Naive thymus-derived CD4-positive, alpha-beta T cell (primary cell): ENCODE measurements at regions of chr2 and their contacts with region 1.

Region 1: GRCh38 chr2:199739413-199740110 is 111.4 kb downstream of the FTCDNL1 start:
- DNase-seq: peak in 8 of 9 donors; percentile 13 to 57 (median 34)
- ATAC-seq: peak; percentile 73
- H3K4me3 ChIP-seq: no peak overlapping the region
- H3K4me3 Mint-ChIP-seq: peak overlapping the region in 2 of 10 donors; percentile 8 to 10
- H3K27ac ChIP-seq: no peak overlapping the region
- H3K27ac Mint-ChIP-seq: no peak overlapping the region
- H3K4me1 ChIP-seq: no peaks in the 10 kb centered on the region
- H3K4me1 Mint-ChIP-seq: peaks cover 0 to 7% (median 5%) of the 10 kb centered on the region in 7 donors
- H3K27me3 ChIP-seq: no peaks in the 10 kb centered on the region
- H3K27me3 Mint-ChIP-seq: peaks cover 6 to 32% (median 19%) of the 10 kb centered on the region in 5 donors

Region 2: DNA sequence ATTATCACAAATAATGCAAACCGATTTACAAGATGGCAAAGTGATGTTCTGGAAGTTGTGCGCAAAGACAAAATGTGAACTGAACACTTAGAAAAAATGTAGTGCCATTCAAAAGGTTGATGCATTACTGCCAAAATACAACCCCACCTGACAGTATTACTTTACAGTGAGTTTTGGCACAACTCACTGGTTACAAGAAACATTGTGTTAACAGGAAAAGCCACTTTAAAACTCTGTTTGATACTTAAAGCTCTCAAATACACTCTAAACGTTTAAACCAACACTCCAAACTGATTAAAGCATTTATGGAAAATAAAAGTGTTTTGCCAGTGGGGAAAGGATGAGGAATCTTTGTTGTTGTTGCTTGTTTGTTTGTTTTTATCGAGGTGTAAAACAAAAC is 108.4 kb before region 1 on chr2:
- CTCF ChIA-PET with region 1: no interaction called
- POLR2A ChIA-PET with region 1: no interaction called
- intact Hi-C with region 1: no loop called
- DNase-seq: no peak
- ATAC-seq: no peak
- H3K4me3 ChIP-seq: no peak overlapping the region
- H3K4me3 Mint-ChIP-seq: no peak overlapping the region
- H3K27ac ChIP-seq: no peak overlapping the region
- H3K27ac Mint-ChIP-seq: no peak overlapping the region
- H3K4me1 ChIP-seq: no peaks in the 10 kb centered on the region
- H3K4me1 Mint-ChIP-seq: no peaks in the 10 kb centered on the region
- H3K27me3 ChIP-seq: no peaks in the 10 kb centered on the region
- H3K27me3 Mint-ChIP-seq: peaks cover 0 to 7% (median 4%) of the 10 kb centered on the region in 5 donors

Region 3: DNA sequence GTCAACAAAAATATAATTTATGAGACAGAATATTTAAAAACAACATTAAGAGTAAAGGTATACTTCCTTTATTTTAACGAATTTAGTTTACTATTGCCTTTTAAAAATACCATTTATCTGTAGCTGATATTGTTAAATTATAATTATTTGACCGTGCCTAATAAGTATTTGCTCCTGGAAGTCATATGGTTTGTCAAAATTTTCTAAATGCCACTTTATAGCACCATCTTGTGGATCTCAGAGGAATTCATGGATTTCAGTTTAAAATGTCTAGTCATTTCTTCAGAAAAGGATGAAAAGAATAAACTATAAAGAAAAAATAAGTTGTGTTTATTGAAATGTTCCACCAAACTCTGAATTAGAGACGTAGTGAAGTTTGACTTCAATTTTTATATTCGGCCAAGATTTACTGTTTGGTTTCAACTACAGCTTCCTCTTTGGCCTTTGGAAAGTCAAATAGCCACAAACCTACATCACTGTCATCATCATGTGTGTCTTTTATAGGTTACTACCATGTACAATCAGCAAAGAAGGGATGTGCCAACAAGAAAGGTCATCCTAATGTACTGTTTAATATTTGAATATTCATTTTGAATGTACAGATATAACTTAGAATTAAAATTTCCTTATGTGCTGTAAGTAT is 121.7 kb after region 1 on chr2:
- CTCF ChIA-PET with region 1: no interaction called
- POLR2A ChIA-PET with region 1: no interaction called
- intact Hi-C with region 1: loop called (anchors 1 to 10 kb)
- DNase-seq: peak in 1 of 9 donors; percentile 3
- ATAC-seq: peak; percentile 42
- H3K4me3 ChIP-seq: no peak overlapping the region
- H3K4me3 Mint-ChIP-seq: no peak overlapping the region
- H3K27ac ChIP-seq: no peak overlapping the region
- H3K27ac Mint-ChIP-seq: no peak overlapping the region
- H3K4me1 ChIP-seq: no peaks in the 10 kb centered on the region
- H3K4me1 Mint-ChIP-seq: no peaks in the 10 kb centered on the region
- H3K27me3 ChIP-seq: no peaks in the 10 kb centered on the region
- H3K27me3 Mint-ChIP-seq: peaks cover 6 to 57% (median 17%) of the 10 kb centered on the region in 5 donors

Region 4: DNA sequence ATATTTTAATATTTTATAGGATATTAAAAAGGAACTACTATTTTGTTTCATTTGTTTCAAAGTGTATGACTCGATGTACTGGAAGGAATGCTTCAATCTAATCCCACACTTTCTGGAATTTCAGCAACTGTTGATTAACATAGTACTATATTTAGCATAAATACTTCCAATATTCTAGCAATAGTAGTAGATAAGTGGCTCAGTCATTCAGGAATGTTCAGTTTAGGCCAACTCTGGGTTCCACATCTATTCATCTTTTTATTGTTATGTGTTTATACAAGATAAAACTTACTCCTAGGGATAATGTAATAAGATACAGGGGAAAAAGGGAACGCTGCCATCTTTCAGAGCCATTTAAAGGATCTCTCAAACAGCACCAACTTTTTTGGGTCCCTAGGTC is 1246.2 kb after region 1 on chr2:
- CTCF ChIA-PET with region 1: no interaction called
- POLR2A ChIA-PET with region 1: no interaction called
- intact Hi-C with region 1: no loop called
- DNase-seq: no peak
- ATAC-seq: no peak
- H3K4me3 ChIP-seq: no peak overlapping the region
- H3K4me3 Mint-ChIP-seq: no peak overlapping the region
- H3K27ac ChIP-seq: no peak overlapping the region
- H3K27ac Mint-ChIP-seq: peak overlapping the region in 1 of 9 donors; percentile 11
- H3K4me1 ChIP-seq: no peaks in the 10 kb centered on the region
- H3K4me1 Mint-ChIP-seq: peaks cover 0 to 2% (median 0%) of the 10 kb centered on the region in 7 donors
- H3K27me3 ChIP-seq: no peaks in the 10 kb centered on the region
- H3K27me3 Mint-ChIP-seq: no peaks in the 10 kb centered on the region